Psoas muscle (tissue), 8 donors: ENCODE measurements at regions of chr3 and their contacts with region 1.

Region 1: GRCh38 chr3:132399054-132399929 is 18.0 kb upstream of the DNAJC13 start:
- DNase-seq: no peak
- ATAC-seq: peak in 3 of 4 donors; percentile 56 to 63 (median 57)
- H3K4me3 ChIP-seq: no peak overlapping the region
- H3K27ac ChIP-seq: no peak overlapping the region
- H3K4me1 ChIP-seq: no peaks in the 10 kb centered on the region
- H3K27me3 ChIP-seq: no peaks in the 10 kb centered on the region
- CTCF ChIP-seq: peak; percentile 70

Region 2: GRCh38 chr3:132352541-132353143 is 46.6 kb before region 1 on chr3:
- intact Hi-C with region 1: loop called in 1 of 2 experiments (anchors 5 kb)
- DNase-seq: peak in 1 of 2 donors; percentile 21
- ATAC-seq: peak; percentile 81 to 94 (median 85)
- H3K4me3 ChIP-seq: no peak overlapping the region
- H3K27ac ChIP-seq: no peak overlapping the region
- H3K4me1 ChIP-seq: no peaks in the 10 kb centered on the region
- H3K27me3 ChIP-seq: no peaks in the 10 kb centered on the region
- CTCF ChIP-seq: peak; percentile 89